GM12878 (cell line): ENCODE measurements at regions of chr1 and their contacts with region 1.

Region 1: GRCh38 chr1:200620273-200621131 is at the start of gene KIF14:
- DNase-seq: peak; percentile 67
- ATAC-seq: peak; percentile 92
- H3K4me3 ChIP-seq: peak within 1 kb of the TSS; percentile 88
- H3K27ac ChIP-seq: peak within 1 kb of the TSS; percentile 74
- H3K4me1 ChIP-seq: peaks cover 20% of the 10 kb centered on the region
- H3K27me3 ChIP-seq: no peaks in the 10 kb centered on the region
- CTCF ChIP-seq: no peak
- EP300 ChIP-seq: no peak
- POLR2A ChIP-seq: peak; percentile 82
- RAD21 ChIP-seq: no peak
- polyA plus RNA-seq, gene KIF14: 6.8 to 6.9 TPM

Region 2: GRCh38 chr1:200302192-200302920 is 318.1 kb before region 1 on chr1:
- CTCF ChIA-PET with region 1: no interaction called
- POLR2A ChIA-PET with region 1: no interaction called
- RAD21 ChIA-PET with region 1: no interaction called
- SMC1A ChIA-PET with region 1: no interaction called
- in situ Hi-C with region 1: no loop called
- intact Hi-C with region 1: no loop called
- DNase-seq: no peak
- ATAC-seq: peak; percentile 80
- H3K4me3 ChIP-seq: peak overlapping the region; percentile 81
- H3K27ac ChIP-seq: no peak overlapping the region
- H3K4me1 ChIP-seq: peaks cover 22% of the 10 kb centered on the region
- H3K27me3 ChIP-seq: peaks cover 0 to 4% of the 10 kb centered on the region in 2 experiments; a peak in 2 of 4 replicates
- CTCF ChIP-seq: 0 out of 6 replicates have a peak, but pooled peaks of 1 of the 3 experiments have one; percentile 2
- EP300 ChIP-seq: no peak
- POLR2A ChIP-seq: no peak
- RAD21 ChIP-seq: 0 out of 2 replicates have a peak, but pooled peaks have one; percentile 20

Region 3: DNA sequence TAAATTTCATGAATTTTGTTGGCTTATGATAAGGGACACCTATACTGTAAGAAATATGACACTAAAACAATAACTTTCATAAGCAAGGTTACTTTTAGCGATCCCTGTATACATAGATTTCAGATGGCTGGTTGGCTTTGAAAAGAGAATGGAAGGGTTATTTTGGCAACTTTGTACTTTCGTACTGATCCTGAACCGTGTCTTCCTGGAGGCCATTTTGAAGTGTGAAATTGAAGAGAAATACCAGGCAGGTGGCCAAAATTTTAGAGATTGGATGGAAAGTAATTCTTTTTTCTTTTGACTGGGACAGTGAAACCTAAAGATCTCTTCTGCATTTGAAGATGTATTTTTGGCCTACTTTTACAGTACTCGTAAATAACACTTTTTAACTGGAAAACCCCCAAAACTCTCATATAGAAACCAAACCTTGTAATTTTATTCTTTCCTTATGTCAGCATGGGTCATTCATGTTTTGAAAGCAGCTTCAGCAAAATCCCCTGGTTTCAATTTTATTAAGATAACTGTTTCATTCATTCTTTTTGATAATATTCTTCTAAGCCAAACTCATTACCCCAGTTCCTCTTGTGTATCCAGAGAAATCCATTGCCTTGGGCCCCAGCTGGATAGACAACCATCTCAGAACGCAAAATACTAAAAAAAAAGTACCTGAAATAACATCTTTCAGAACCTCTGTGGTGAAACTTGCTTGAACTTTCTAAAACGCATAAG is 172.3 kb before region 1 on chr1:
- CTCF ChIA-PET with region 1: no interaction called
- POLR2A ChIA-PET with region 1: no interaction called
- RAD21 ChIA-PET with region 1: no interaction called
- SMC1A ChIA-PET with region 1: no interaction called
- in situ Hi-C with region 1: no loop called
- intact Hi-C with region 1: no loop called
- DNase-seq: peak; percentile 81
- ATAC-seq: peak; percentile 91
- H3K4me3 ChIP-seq: no peak overlapping the region; the same call in 1 of the 2 replicates
- H3K27ac ChIP-seq: peak overlapping the region; percentile 92
- H3K4me1 ChIP-seq: peaks cover 16% of the 10 kb centered on the region; the same call in 1 of the 2 replicates
- H3K27me3 ChIP-seq: no peaks in the 10 kb centered on the region
- CTCF ChIP-seq: no peak
- EP300 ChIP-seq: peak; percentile 94 to 97
- POLR2A ChIP-seq: no peak
- RAD21 ChIP-seq: peak; percentile 4; the same call in 1 of the 2 replicates

Region 4: GRCh38 chr1:200639790-200640669 is 19.5 kb after region 1 on chr1:
- CTCF ChIA-PET with region 1: interaction called, 25 read pairs
- POLR2A ChIA-PET with region 1: interaction called, 3 read pairs
- RAD21 ChIA-PET with region 1: interaction called, 5 read pairs
- SMC1A ChIA-PET with region 1: interaction called, 18 read pairs
- in situ Hi-C with region 1: no loop called
- intact Hi-C with region 1: no loop called
- DNase-seq: no peak
- ATAC-seq: peak; percentile 99
- H3K4me3 ChIP-seq: no peak overlapping the region
- H3K27ac ChIP-seq: peak overlapping the region; percentile 78
- H3K4me1 ChIP-seq: peaks cover 9% of the 10 kb centered on the region; the same call in 1 of the 2 replicates
- H3K27me3 ChIP-seq: no peaks in the 10 kb centered on the region
- CTCF ChIP-seq: no peak
- EP300 ChIP-seq: no peak; a peak in 1 of 4 replicates
- POLR2A ChIP-seq: no peak
- RAD21 ChIP-seq: no peak

Region 5: DNA sequence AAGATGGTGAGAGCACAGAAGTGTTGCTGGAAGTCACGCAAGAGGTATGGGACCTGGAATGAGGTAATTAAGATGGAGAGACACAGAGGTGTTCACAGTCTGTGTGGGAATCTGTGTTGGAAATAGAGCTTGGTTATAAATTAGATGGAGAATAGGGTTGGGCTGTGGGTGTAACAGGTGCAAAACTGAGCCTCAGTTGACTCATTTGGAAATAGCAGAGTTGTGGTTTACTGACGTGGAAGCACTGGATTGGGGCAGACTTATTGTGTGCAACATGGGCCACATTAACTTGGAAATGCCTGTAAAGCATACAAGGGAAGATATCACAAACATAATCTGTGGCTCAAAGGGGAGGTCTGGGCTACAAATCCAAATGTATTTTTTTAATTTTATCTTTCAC is 131.2 kb after region 1 on chr1:
- CTCF ChIA-PET with region 1: interaction called, 13 read pairs
- POLR2A ChIA-PET with region 1: interaction called, 6 read pairs
- RAD21 ChIA-PET with region 1: interaction called, 3 read pairs
- SMC1A ChIA-PET with region 1: interaction called, 7 read pairs
- in situ Hi-C with region 1: no loop called
- intact Hi-C with region 1: no loop called
- DNase-seq: no peak
- ATAC-seq: peak; percentile 92
- H3K4me3 ChIP-seq: no peak overlapping the region
- H3K27ac ChIP-seq: no peak overlapping the region
- H3K4me1 ChIP-seq: no peaks in the 10 kb centered on the region
- H3K27me3 ChIP-seq: no peaks in the 10 kb centered on the region
- CTCF ChIP-seq: no peak
- EP300 ChIP-seq: no peak
- POLR2A ChIP-seq: no peak
- RAD21 ChIP-seq: no peak

Region 6: DNA sequence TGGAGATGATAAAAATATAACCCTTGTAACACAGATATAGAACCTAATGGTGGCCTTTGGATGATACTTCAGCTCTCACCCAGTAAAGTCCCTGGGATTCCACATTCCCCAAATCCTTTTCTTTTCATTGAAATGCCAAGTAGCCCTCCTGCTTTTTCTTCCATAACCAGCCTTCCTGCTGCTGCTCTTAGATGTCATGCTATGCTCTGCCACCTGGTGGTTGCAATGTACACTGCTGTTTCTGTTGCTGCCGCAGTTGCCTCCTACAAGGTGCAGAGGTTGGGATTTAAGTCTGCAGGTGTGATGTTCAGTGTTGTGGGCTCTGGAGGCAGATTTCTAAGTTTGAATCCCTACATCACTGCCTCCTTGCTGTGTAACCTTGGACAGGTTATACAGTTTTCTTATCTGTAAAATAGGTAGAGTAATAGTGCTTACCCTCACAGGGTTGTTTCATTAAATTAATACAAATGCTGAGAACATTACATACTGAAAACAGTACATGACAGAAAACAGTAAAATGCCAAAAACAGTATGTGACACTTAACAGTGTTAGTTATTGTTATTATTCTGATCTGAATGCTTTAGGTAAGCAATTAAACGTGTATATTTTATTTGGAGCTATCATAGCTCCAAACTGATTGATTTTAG is 182.5 kb after region 1 on chr1:
- CTCF ChIA-PET with region 1: interaction called, 280 read pairs
- POLR2A ChIA-PET with region 1: interaction called, 10 read pairs
- RAD21 ChIA-PET with region 1: interaction called, 179 read pairs
- SMC1A ChIA-PET with region 1: interaction called, 195 read pairs
- in situ Hi-C with region 1: loop called (anchors 5 kb)
- intact Hi-C with region 1: loop called (anchors 1 kb)
- DNase-seq: peak; percentile 61
- ATAC-seq: peak; percentile 98
- H3K4me3 ChIP-seq: no peak overlapping the region
- H3K27ac ChIP-seq: no peak overlapping the region
- H3K4me1 ChIP-seq: no peaks in the 10 kb centered on the region
- H3K27me3 ChIP-seq: no peaks in the 10 kb centered on the region
- CTCF ChIP-seq: peak; percentile 86 to 92 (median 92)
- EP300 ChIP-seq: no peak
- POLR2A ChIP-seq: no peak
- RAD21 ChIP-seq: peak; percentile 99

Region 7: DNA sequence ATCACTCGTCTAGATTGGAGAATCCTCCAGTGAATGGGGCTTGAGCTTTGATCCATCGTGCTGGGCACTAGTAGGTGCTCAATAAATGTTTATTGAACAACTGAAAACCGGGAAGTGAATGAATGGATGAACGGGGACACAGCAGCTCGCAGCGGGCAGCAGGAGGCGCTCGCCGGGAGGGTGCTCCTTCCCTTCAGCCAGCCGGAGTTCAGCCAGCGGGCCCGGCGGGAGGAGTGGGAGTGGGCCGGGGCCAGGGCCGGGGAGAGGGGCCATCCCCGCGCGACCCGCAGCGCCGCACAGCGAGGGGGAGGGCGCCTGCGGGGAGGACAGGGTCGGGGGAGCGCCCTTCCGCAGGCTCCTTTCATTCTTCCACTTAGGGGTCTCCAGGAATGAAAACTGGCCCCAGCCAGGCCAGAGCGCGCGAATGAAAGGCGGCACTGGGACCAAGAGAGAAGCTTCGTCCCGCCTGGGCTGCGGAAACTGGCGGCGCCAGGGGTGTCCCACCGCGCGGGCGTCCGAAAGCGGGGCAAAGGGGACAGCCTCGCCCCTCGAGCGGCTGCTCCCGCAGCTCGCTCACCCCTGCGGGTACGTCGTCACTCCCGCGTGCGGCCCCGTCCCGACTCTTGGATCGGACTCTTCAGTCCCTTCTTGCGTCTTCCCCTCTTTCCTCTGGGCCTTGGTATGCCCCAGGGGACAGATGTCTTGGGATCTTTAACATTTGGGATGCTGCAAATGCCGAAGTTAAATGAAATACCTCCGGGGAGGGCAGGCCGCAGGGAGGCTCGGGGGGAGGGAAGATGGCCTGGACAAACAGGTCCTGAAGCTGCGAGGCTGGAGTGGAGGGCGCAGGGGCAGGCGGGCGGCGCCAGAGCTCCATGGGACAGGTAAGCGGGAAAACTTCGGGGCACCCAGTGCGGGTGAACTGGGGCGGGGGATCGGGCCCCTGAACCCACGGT is 270.6 kb after region 1 on chr1:
- CTCF ChIA-PET with region 1: interaction called, 8 read pairs
- POLR2A ChIA-PET with region 1: interaction called, 7 read pairs
- RAD21 ChIA-PET with region 1: interaction called, 28 read pairs
- SMC1A ChIA-PET with region 1: interaction called, 18 read pairs
- in situ Hi-C with region 1: no loop called
- intact Hi-C with region 1: loop called (anchors 5 kb)
- DNase-seq: no peak
- ATAC-seq: peak; percentile 5
- H3K4me3 ChIP-seq: peak overlapping the region; percentile 45
- H3K27ac ChIP-seq: peak overlapping the region; percentile 69; the same call in 1 of the 2 replicates
- H3K4me1 ChIP-seq: peaks cover 61% of the 10 kb centered on the region
- H3K27me3 ChIP-seq: no peaks in the 10 kb centered on the region
- CTCF ChIP-seq: peak; percentile 42 to 58 (median 47)
- EP300 ChIP-seq: no peak
- POLR2A ChIP-seq: peak; percentile 53; the same call in 1 of the 2 replicates
- RAD21 ChIP-seq: peak; percentile 26; the same call in 1 of the 2 replicates

Region 8: GRCh38 chr1:201023517-201023902 is 403.0 kb after region 1 on chr1 and contains the start of gene KIF21B:
- CTCF ChIA-PET with region 1: interaction called, 23 read pairs
- POLR2A ChIA-PET with region 1: interaction called, 5 read pairs
- RAD21 ChIA-PET with region 1: interaction called, 4 read pairs
- SMC1A ChIA-PET with region 1: interaction called, 4 read pairs
- in situ Hi-C with region 1: no loop called
- intact Hi-C with region 1: no loop called
- DNase-seq: no peak
- ATAC-seq: peak; percentile 68
- H3K4me3 ChIP-seq: peak within 1 kb of the TSS; percentile 93
- H3K27ac ChIP-seq: peak within 1 kb of the TSS; percentile 94
- H3K4me1 ChIP-seq: peaks cover 81% of the 10 kb centered on the region
- H3K27me3 ChIP-seq: no peaks in the 10 kb centered on the region
- CTCF ChIP-seq: no peak
- EP300 ChIP-seq: no peak
- POLR2A ChIP-seq: peak; percentile 74
- RAD21 ChIP-seq: no peak
- polyA plus RNA-seq, gene KIF21B: 2.3 to 2.9 TPM